Endothelial cell of umbilical vein (primary cell): ENCODE measurements at regions of chr7 and their contacts with region 1.

Region 1: DNA sequence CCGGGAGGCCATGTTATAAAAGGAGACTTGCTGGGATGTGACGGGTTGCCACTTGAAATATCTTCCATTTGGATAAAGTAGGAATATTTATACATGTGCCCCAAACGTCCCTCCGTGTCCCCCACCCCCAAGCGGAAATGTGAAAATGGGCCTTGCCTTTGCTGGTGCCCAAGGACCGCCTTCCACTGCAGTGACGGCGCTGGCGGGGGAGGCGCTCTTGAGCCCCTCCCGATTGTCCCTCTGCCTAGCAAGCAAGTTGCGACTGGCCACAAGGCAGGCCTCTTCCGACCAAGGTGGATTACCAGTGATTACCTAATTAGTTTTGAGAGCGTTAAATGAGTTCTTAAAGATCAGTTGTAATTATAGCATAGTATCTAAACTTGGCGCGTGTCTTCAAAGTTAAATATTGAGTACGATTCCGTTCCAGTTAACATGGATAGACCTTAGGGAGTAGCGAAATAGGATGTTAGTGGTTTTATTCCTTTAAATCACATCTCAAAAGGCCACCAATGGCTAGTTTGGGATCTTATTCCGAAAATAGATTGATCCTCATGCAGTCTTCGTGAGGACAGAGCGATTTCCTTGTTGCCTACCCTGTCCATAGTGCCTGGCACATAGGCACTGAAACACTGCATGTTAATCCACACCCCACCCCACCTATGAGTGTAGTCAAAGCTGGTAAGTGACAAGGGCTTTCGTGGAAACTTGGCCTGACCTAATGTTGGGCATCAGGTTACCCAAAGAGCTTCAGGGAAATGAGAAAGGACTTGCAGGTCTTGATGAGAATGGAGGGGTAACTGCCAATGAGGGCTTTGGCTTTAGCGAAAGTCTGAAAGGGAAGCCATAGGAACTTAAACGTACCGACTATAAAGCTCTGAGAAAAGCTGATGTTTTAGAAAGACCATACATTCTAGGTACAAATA is 1.1 kb downstream of the PPIA start:
- DNase-seq: peak; percentile 90
- H3K4me3 ChIP-seq: peak overlapping the region; percentile 91 to 93 (median 93)
- H3K27ac ChIP-seq: peak overlapping the region; percentile 97
- H3K4me1 ChIP-seq: peaks cover 10% of the 10 kb centered on the region
- H3K27me3 ChIP-seq: no peaks in the 10 kb centered on the region
- CTCF ChIP-seq: peak; percentile 20 to 56
- POLR2A ChIP-seq: peak; percentile 43

Region 2: GRCh38 chr7:44454348-44454747 is 343.2 kb before region 1 on chr7:
- CTCF ChIA-PET with region 1: no interaction called
- POLR2A ChIA-PET with region 1: no interaction called
- dilution Hi-C with region 1: no loop called
- intact Hi-C with region 1: no loop called
- DNase-seq: no peak
- H3K4me3 ChIP-seq: no peak overlapping the region
- H3K27ac ChIP-seq: no peak overlapping the region
- H3K4me1 ChIP-seq: no peaks in the 10 kb centered on the region
- H3K27me3 ChIP-seq: no peaks in the 10 kb centered on the region
- CTCF ChIP-seq: no peak
- POLR2A ChIP-seq: no peak

Region 3: GRCh38 chr7:44477063-44477830 is 320.3 kb before region 1 on chr7:
- CTCF ChIA-PET with region 1: no interaction called
- POLR2A ChIA-PET with region 1: no interaction called
- dilution Hi-C with region 1: no loop called
- intact Hi-C with region 1: no loop called
- DNase-seq: peak; percentile 73
- H3K4me3 ChIP-seq: no peak overlapping the region
- H3K27ac ChIP-seq: peak overlapping the region; percentile 31
- H3K4me1 ChIP-seq: peaks cover 29% of the 10 kb centered on the region
- H3K27me3 ChIP-seq: no peaks in the 10 kb centered on the region
- CTCF ChIP-seq: peak; percentile 95 to 99
- POLR2A ChIP-seq: no peak

Region 4: GRCh38 chr7:44573464-44574286 is 223.9 kb before region 1 on chr7 and contains the start of gene DDX56:
- CTCF ChIA-PET with region 1: no interaction called
- POLR2A ChIA-PET with region 1: no interaction called
- dilution Hi-C with region 1: no loop called
- intact Hi-C with region 1: no loop called
- DNase-seq: peak; percentile 96
- H3K4me3 ChIP-seq: peak within 1 kb of the TSS; percentile 36 to 77 (median 54)
- H3K27ac ChIP-seq: peak within 1 kb of the TSS; percentile 73
- H3K4me1 ChIP-seq: peaks cover 9% of the 10 kb centered on the region
- H3K27me3 ChIP-seq: no peaks in the 10 kb centered on the region
- CTCF ChIP-seq: no peak
- POLR2A ChIP-seq: peak; percentile 95
- total RNA-seq, gene DDX56: 93.4 and 96.6 TPM in 2 replicates

Region 5: DNA sequence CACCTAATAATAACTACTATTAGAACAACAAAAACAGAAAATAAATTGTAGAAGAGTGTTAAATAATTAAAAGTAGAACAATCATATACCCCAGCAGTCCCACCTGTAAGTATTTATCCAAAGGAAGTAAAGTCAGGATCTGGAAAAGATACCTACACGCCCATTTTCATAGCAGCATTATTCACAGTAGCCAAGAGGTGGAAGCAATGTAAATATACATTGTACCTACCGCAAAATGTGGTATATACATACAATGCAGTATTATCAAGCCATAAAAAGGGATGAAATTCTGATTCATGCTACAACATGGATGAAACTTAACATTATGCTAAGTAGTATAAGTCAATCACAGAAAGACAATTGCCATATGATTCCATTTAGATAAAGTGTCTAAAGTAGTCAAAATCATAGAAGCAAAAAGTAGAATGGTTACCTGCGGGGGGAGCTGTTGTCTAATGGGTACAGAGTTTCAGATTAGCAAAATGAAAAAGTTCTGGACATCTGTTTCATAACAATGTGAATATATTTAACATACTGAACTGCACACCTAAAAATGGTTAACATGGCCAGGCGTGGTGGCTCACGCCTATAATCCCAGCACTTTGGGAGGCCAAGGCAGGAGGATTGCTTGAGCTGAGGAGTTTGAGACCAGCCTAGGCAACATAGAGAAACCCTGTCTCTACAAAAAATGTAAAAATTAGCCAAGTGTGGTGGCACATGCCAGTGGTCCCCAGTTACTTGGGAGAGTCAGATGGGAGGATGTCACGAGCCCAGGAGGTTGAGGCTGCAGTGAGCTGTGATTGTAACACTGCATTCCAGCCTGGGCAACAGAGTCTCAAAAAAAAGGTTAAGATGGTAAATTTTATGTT is 209.5 kb before region 1 on chr7:
- CTCF ChIA-PET with region 1: interaction called, 4 read pairs
- POLR2A ChIA-PET with region 1: interaction called, 3 read pairs
- dilution Hi-C with region 1: no loop called
- intact Hi-C with region 1: loop called (anchors 1 kb)
- DNase-seq: peak; percentile 81
- H3K4me3 ChIP-seq: no peak overlapping the region
- H3K27ac ChIP-seq: no peak overlapping the region
- H3K4me1 ChIP-seq: no peaks in the 10 kb centered on the region
- H3K27me3 ChIP-seq: no peaks in the 10 kb centered on the region
- CTCF ChIP-seq: peak; percentile 27 to 48
- POLR2A ChIP-seq: no peak

Region 6: GRCh38 chr7:44638611-44639557 is 158.7 kb before region 1 on chr7:
- CTCF ChIA-PET with region 1: interaction called, 3 read pairs
- POLR2A ChIA-PET with region 1: no interaction called
- dilution Hi-C with region 1: no loop called
- intact Hi-C with region 1: loop called (anchors 1 kb)
- DNase-seq: peak; percentile 67
- H3K4me3 ChIP-seq: no peak overlapping the region
- H3K27ac ChIP-seq: peak overlapping the region; percentile 88
- H3K4me1 ChIP-seq: peaks cover 47% of the 10 kb centered on the region
- H3K27me3 ChIP-seq: no peaks in the 10 kb centered on the region
- CTCF ChIP-seq: no peak
- POLR2A ChIP-seq: peak; percentile 37

Region 7: DNA sequence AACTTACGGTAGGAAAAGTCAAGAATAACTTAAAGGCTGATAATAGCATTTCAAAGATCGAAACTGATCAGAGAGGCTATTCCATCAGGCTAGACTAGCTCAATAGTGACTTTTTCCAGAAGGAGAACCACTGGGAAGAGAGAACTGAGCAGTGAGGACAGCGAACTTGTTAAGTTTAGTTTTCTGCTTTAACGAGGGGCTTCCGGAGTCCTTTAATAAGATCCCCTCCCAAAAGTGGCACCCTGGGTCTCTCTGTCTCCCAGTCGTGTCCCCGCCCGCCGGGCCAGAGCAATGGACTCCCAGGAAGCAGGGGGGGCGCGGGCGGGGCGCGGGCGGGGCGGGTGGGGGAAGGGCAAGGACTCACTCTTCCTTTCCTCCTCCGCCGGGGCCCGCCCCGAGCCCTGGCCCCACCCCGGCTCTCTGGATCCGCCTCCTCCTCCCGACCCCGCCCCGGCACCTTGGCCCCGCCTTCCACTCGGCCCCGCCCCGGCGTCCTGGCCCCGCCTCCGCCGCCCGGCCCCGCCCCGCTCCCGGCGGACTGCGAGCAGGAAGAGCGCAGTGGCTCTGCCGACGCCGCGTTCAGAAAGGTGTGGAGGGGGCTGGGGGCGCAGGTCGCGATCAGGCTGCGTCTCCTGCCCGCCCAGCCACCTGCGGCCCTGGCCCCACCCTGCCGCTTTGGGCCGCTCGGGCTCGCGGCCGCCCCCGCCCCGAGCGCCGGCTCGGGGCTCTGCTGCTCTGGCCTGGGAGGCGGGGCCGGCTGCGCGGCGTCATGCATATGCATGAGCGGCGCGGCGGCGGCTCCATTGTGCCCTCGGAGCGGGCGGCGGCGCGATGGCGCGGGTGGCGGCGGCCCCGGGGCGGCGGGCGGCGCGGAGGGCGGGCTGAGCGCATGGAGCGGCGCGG is 49.3 kb before region 1 on chr7 and contains the start of gene ZMIZ2:
- CTCF ChIA-PET with region 1: no interaction called
- POLR2A ChIA-PET with region 1: interaction called, 3 read pairs
- dilution Hi-C with region 1: no loop called
- intact Hi-C with region 1: loop called (anchors 1 kb)
- DNase-seq: peak; percentile 88
- H3K4me3 ChIP-seq: peak within 1 kb of the TSS; percentile 46 to 98 (median 71)
- H3K27ac ChIP-seq: peak within 1 kb of the TSS; percentile 82
- H3K4me1 ChIP-seq: peaks cover 22% of the 10 kb centered on the region
- H3K27me3 ChIP-seq: no peaks in the 10 kb centered on the region
- CTCF ChIP-seq: no peak
- POLR2A ChIP-seq: peak; percentile 68
- total RNA-seq, gene ZMIZ2: 87.5 and 88.6 TPM in 2 replicates

Region 8: GRCh38 chr7:44921607-44922359 is 124.2 kb after region 1 on chr7:
- CTCF ChIA-PET with region 1: no interaction called
- POLR2A ChIA-PET with region 1: no interaction called
- dilution Hi-C with region 1: no loop called
- intact Hi-C with region 1: loop called (anchors 1 kb)
- DNase-seq: peak; percentile 69
- H3K4me3 ChIP-seq: no peak overlapping the region
- H3K27ac ChIP-seq: no peak overlapping the region
- H3K4me1 ChIP-seq: no peaks in the 10 kb centered on the region
- H3K27me3 ChIP-seq: peaks cover 0 to 3% of the 10 kb centered on the region in 2 experiments
- CTCF ChIP-seq: peak; percentile 75 to 91
- POLR2A ChIP-seq: no peak

Region 9: GRCh38 chr7:45026984-45027773 is 229.6 kb after region 1 on chr7:
- CTCF ChIA-PET with region 1: no interaction called
- POLR2A ChIA-PET with region 1: no interaction called
- dilution Hi-C with region 1: no loop called
- intact Hi-C with region 1: no loop called
- DNase-seq: peak; percentile 31
- H3K4me3 ChIP-seq: no peak overlapping the region
- H3K27ac ChIP-seq: peak overlapping the region; percentile 3
- H3K4me1 ChIP-seq: peaks cover 15% of the 10 kb centered on the region
- H3K27me3 ChIP-seq: no peaks in the 10 kb centered on the region
- CTCF ChIP-seq: no peak
- POLR2A ChIP-seq: no peak